ENCODE measurements at regions of chr17 and their contacts with region 1.

Region 1: GRCh38 chr17:42720996-42721583 is 23.8 kb downstream of the EZH1 start:
- DNase-seq: peak; percentile 19 to 58 (median 33)
- ATAC-seq: peak; percentile 71
- H3K4me3 ChIP-seq: no peak overlapping the region
- H3K27ac ChIP-seq: no peak overlapping the region
- H3K4me1 ChIP-seq: no peaks in the 10 kb centered on the region
- H3K27me3 ChIP-seq: no peaks in the 10 kb centered on the region
- CTCF ChIP-seq: peak; percentile 38 to 78 (median 68)
- POLR2A ChIP-seq: no peak

Region 2: GRCh38 chr17:42819944-42820535 is 99.0 kb after region 1 on chr17:
- intact Hi-C with region 1: loop called (anchors 10 kb)
- DNase-seq: peak; percentile 51 to 78 (median 72)
- ATAC-seq: no peak
- H3K4me3 ChIP-seq: no peak overlapping the region
- H3K27ac ChIP-seq: no peak overlapping the region
- H3K4me1 ChIP-seq: peaks cover 24% of the 10 kb centered on the region
- H3K27me3 ChIP-seq: no peaks in the 10 kb centered on the region
- CTCF ChIP-seq: peak; percentile 28 to 60 (median 52)
- POLR2A ChIP-seq: no peak

Region 3: GRCh38 chr17:42846614-42847282 is 125.7 kb after region 1 on chr17:
- intact Hi-C with region 1: no loop called
- DNase-seq: peak in 2 of 4 donors; percentile 10 to 32
- ATAC-seq: no peak
- H3K4me3 ChIP-seq: no peak overlapping the region
- H3K27ac ChIP-seq: peak overlapping the region in 1 of 4 donors; percentile 11
- H3K4me1 ChIP-seq: peaks cover 14% of the 10 kb centered on the region
- H3K27me3 ChIP-seq: no peaks in the 10 kb centered on the region
- CTCF ChIP-seq: no peak
- POLR2A ChIP-seq: no peak

Measured in body of pancreas (tissue), 4 donors.